ENCODE measurements at regions of chr12 and their contacts with region 1.

Region 1: DNA sequence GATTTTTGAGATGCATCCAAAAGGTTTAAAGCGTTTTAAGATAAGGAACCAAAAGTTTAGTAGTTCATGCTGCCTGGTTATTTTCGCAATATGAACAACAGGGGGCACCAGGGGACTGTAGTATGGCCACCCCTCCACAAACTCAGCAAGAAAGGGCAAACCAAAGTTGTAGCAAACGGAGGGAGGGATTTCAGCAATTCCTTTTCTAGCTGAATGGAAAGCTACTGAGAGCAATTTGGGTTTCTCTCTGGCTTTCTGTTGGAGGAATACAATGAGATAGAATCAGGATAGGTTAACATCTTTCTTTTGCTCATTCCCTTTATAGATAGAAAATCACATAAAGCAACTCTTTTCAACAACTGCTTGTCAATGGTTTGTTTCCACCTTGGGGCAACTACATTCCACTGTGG is 62.5 kb downstream of the DRAM1 start:
- DNase-seq: no peak
- CTCF ChIP-seq: peak; percentile 72

Region 2: DNA sequence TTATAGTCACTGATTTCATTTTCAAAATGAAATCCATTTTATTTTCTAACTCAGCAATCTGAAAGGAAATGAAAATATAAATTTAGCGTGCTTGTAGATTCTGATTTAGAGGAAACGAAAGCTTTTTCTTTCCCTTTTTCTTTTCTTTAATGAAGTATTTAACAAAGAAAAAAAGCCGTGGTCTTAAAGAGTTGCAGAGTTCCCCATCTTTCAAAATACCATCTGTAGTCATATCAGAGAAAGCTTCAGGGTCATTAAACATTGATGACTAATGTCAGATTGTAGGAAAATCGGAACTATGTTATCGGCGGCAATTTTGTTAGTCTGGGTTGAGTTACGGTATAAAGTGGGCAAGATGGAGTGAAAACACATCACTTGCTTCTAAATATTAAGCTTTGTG is 30.2 kb before region 1 on chr12:
- CTCF ChIA-PET with region 1: interaction called, 11 read pairs
- POLR2A ChIA-PET with region 1: interaction called, 8 read pairs
- DNase-seq: no peak
- CTCF ChIP-seq: no peak

Region 3: GRCh38 chr12:102740141-102740955 is 800.5 kb after region 1 on chr12:
- CTCF ChIA-PET with region 1: interaction called, 19 read pairs
- POLR2A ChIA-PET with region 1: no interaction called
- DNase-seq: no peak
- CTCF ChIP-seq: peak; percentile 24

Region 4: GRCh38 chr12:102811110-102811737 is 871.4 kb after region 1 on chr12:
- CTCF ChIA-PET with region 1: interaction called, 16 read pairs
- POLR2A ChIA-PET with region 1: no interaction called
- DNase-seq: peak; percentile 25
- CTCF ChIP-seq: peak; percentile 61

Measured in GM10248 (cell line).